H1 (cell line): ENCODE measurements at regions of chr10 and their contacts with region 1.

Region 1: DNA sequence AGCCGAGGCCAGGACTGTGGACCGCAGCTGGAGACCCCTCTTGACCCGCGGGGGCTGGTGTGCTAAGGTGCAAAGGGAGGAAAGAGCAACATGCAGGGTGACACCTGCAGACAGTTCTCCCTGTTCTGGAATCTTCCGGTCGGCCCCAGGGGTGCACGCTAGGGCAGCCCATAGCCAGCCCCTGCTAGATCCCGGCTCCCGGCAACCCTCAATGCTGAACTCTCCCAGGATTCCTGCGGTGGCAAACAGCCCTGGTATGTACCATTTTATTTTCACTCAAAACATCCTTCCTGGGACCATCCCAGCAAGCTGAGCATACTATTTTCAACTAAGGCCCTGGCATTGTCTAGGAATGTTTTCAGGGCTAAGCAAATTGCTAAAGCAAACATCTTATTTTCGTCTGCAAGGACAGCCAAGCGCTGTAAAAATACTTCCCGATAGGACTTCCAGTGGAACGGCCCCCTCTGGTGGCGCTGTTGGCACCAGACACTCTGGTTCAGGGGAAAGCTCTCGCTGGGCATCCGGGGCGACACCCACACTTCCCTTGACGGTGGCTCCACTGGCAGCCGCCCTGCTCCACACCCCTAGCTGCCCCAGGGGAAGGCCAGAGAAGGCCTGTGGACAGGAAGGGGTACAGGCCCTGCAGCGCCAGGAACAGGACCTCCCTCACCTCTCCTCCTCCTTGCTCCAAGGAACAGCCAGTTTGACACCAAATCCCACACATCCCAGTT is 99.4 kb downstream of the CTBP2 start:
- DNase-seq: peak; percentile 34 to 85
- H3K4me3 ChIP-seq: no peak overlapping the region
- H3K27ac ChIP-seq: no peak overlapping the region
- H3K4me1 ChIP-seq: peaks cover 0 to 37% (median 10%) of the 10 kb centered on the region in 4 experiments; a peak in 6 of 7 replicates
- H3K27me3 ChIP-seq: no peaks in the 10 kb centered on the region
- CTCF ChIP-seq: peak; percentile 69 to 84 (median 76)
- EP300 ChIP-seq: no peak
- POLR2A ChIP-seq: no peak
- RAD21 ChIP-seq: peak; percentile 66 to 76

Region 2: GRCh38 chr10:124740369-124741280 is 320.4 kb before region 1 on chr10:
- CTCF ChIA-PET with region 1: no interaction called
- POLR2A ChIA-PET with region 1: no interaction called
- DNase-seq: no peak
- H3K4me3 ChIP-seq: peak overlapping the region in 1 of 4 experiments; percentile 35; a peak in 2 of 8 replicates
- H3K27ac ChIP-seq: no peak overlapping the region
- H3K4me1 ChIP-seq: peaks cover 29 to 49% (median 32%) of the 10 kb centered on the region in 4 experiments
- H3K27me3 ChIP-seq: peaks cover 1 to 21% (median 14%) of the 10 kb centered on the region in 4 experiments; a peak in 6 of 7 replicates
- CTCF ChIP-seq: no peak
- EP300 ChIP-seq: no peak
- POLR2A ChIP-seq: no peak
- RAD21 ChIP-seq: no peak

Region 3: DNA sequence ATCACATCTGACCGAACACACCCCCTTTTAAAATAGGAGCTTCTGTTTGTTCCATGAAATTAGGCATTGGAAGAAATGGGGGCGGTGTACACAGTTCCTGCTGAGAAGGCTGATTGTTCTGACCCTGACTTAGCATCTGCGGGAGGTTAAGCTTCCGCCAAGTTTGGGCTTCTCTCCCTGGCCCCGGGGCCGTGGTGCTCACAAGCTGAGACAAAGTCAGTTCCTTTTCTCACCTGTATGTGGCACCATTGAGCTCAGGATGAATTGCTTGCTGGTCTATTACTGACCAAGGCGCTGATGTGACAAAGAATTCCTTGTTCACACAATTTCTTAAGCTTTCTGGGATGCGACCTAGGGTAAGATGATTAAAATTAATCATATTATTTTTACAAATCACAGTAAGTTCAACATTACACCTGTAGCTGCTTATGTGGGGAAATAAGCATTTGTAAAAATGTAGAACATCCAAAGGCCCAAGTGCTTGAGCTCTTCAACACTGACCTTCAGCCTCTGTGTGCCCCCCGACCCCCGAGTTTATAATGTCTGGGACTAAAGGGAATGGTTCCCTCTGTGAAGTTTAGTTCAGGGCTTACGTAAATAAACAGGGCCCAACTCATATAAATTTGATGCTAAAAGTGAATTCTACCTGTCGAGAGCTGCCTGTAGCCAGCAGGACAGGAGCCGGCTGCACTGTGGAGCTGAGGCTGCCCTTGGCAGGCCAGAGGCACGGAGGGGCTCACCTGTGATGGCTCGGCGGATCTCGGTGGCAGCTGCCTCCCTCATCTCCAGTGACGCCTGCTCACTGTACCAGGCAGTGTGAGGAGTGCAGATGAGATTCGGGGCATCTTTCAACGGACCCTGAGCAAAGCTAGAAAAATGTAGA is 68.3 kb before region 1 on chr10:
- CTCF ChIA-PET with region 1: interaction called, 22 read pairs
- POLR2A ChIA-PET with region 1: no interaction called
- DNase-seq: peak in 1 of 2 experiments; percentile 77
- H3K4me3 ChIP-seq: no peak overlapping the region
- H3K27ac ChIP-seq: no peak overlapping the region
- H3K4me1 ChIP-seq: no peaks in the 10 kb centered on the region; a peak in 1 of 7 replicates
- H3K27me3 ChIP-seq: no peaks in the 10 kb centered on the region
- CTCF ChIP-seq: peak; percentile 23 to 57 (median 35)
- EP300 ChIP-seq: no peak
- POLR2A ChIP-seq: no peak
- RAD21 ChIP-seq: peak; percentile 48 to 61

Region 4: DNA sequence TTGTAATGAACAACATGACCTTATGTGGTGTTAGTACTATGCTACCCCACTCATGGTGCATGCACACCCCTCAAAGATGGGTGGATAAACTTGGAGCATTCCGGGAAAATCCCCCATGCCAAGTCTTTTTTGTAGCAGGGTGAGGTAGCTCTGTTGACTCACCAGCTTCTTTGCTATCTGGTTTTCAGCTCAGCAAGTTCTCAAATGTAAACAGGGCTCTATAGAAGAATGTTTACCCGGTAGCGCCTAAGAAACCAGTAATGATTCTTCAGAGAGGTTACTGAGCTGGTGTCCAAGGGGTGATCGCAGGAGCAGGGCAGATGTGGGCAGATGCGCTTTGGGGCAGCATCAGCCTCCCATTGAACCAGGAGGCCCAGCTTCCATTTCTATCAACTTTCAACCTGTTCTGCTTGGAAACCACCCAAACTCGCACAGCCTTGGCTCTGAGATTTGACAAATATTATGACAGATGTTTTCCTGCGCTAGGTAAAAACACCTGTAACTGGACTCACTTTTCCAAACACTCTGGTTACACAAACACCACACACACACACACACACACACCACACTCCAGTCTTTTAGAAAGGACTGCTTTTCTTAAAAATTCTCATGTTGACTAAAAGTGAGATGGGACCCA is 31.3 kb before region 1 on chr10:
- CTCF ChIA-PET with region 1: interaction called, 10 read pairs
- POLR2A ChIA-PET with region 1: interaction called, 3 read pairs
- DNase-seq: no peak
- H3K4me3 ChIP-seq: no peak overlapping the region
- H3K27ac ChIP-seq: no peak overlapping the region; the same call in 1 of the 2 replicates
- H3K4me1 ChIP-seq: peaks cover 0 to 12% (median 6%) of the 10 kb centered on the region in 4 experiments; a peak in 6 of 7 replicates
- H3K27me3 ChIP-seq: no peaks in the 10 kb centered on the region
- CTCF ChIP-seq: no peak
- EP300 ChIP-seq: no peak
- POLR2A ChIP-seq: no peak
- RAD21 ChIP-seq: no peak

Region 5: DNA sequence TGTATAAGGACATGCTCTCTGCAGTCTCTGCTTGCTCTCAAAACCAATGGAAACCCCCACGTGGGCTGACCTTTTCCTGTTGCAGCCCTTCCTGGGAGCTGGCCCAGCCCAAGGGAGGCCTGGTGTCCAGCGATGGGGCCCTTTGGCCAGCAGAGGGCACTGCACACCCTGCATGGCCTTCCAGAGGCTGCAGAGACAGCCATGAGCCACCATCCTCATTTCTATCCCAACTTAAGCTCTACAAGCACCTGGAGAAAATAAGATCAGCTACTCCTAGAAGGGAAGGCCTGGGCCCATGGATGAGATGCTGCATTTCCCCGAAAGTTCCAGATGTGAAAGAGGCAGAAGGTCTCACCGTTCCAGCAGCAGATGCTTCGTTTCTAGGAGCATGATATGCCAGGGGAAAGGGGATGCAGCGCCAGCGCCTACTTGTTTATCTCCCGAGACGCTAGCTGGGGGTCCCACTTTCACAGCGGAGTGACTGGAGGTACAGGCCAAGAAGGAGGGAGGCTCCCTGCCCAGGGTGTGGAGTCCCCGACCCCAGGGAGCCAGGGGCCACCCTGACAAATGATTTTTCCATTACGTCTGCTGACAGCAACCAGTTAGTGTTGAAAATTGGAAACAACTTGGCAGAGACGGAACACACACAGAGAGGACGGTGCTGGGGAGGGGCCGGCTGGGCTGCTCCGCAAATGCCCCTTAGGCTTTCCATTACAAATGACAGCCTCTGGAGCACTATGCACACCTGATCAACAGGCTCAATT is 12.7 kb before region 1 on chr10:
- CTCF ChIA-PET with region 1: interaction called, 110 read pairs
- POLR2A ChIA-PET with region 1: interaction called, 9 read pairs
- DNase-seq: peak; percentile 75 to 95
- H3K4me3 ChIP-seq: no peak overlapping the region
- H3K27ac ChIP-seq: no peak overlapping the region
- H3K4me1 ChIP-seq: peaks cover 3 to 15% (median 12%) of the 10 kb centered on the region in 4 experiments
- H3K27me3 ChIP-seq: no peaks in the 10 kb centered on the region
- CTCF ChIP-seq: peak; percentile 94 to 98 (median 95)
- EP300 ChIP-seq: peak in 1 of 2 experiments; percentile 41; a peak in 1 of 3 replicates
- POLR2A ChIP-seq: no peak
- RAD21 ChIP-seq: peak; percentile 86 to 90

Region 6: GRCh38 chr10:125084191-125084613 is 23.2 kb after region 1 on chr10:
- CTCF ChIA-PET with region 1: interaction called, 14 read pairs
- POLR2A ChIA-PET with region 1: interaction called, 7 read pairs
- DNase-seq: peak in 1 of 2 experiments; percentile 38
- H3K4me3 ChIP-seq: no peak overlapping the region
- H3K27ac ChIP-seq: no peak overlapping the region
- H3K4me1 ChIP-seq: peaks cover 0 to 10% (median 5%) of the 10 kb centered on the region in 4 experiments; a peak in 4 of 7 replicates
- H3K27me3 ChIP-seq: no peaks in the 10 kb centered on the region
- CTCF ChIP-seq: peak in 2 of 3 experiments; percentile 22 to 24; a peak in 2 of 4 replicates
- EP300 ChIP-seq: no peak
- POLR2A ChIP-seq: no peak
- RAD21 ChIP-seq: no peak; a peak in 1 of 4 replicates